GM10248 (cell line): ENCODE measurements at regions of chr9 and their contacts with region 1.

Region 1: GRCh38 chr9:78296893-78297671 is at the start of gene PSAT1:
- DNase-seq: peak; percentile 96
- CTCF ChIP-seq: no peak

Region 2: GRCh38 chr9:78235756-78236538 is 61.1 kb before region 1 on chr9 and contains the start of gene CEP78:
- CTCF ChIA-PET with region 1: no interaction called
- POLR2A ChIA-PET with region 1: interaction called, 10 read pairs
- DNase-seq: peak; percentile 95
- CTCF ChIP-seq: no peak

Region 3: DNA sequence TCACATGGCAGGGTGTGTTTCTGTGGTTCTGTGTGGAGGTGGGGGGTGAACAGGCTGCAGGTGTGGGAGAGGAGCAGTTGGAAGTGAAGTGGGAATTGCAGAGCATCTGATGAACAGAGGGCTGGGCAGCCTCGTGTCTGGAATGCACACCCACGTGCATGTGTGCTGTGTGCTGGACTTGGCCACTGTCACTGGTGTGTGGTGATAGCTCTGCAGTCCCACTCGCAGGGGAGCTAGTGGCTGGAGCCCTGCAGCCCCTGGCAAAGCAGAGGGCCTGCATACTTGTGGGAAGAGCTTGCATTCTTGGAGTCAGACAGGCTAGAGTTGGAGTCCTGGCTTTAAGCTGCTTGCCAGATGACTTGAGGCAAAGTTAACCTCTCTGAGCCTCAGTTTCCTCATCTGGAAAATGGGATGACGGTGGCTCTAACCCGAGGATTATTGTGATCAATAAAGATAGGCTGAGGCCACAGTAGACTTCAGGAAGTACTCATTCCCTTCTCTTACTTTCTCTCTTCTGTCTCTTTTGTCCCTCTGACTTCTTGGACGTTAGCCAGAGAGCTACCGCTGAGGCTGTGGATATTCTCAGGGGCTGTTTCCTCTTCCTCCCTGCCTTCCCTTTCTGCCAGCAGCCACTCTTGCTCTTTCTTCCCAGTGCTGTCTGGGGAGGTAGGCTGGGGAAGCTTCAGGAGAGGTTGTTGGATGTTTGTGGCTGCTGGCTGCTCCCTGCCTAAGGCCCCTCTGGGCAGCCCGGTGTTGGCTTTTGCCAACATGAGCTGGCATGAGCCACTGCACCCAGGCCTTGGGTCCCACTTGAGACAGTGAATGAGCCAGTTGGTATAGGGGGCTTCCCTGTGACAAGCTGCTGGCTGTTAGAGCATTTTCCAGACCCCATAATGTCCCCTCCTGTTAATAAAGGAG is 18.1 kb after region 1 on chr9:
- CTCF ChIA-PET with region 1: interaction called, 11 read pairs
- POLR2A ChIA-PET with region 1: no interaction called
- DNase-seq: no peak
- CTCF ChIP-seq: no peak

Region 4: GRCh38 chr9:78424299-78424698 is 127.2 kb after region 1 on chr9:
- CTCF ChIA-PET with region 1: no interaction called
- POLR2A ChIA-PET with region 1: no interaction called
- DNase-seq: no peak
- CTCF ChIP-seq: no peak